ENCODE measurements at regions of chr12 and their contacts with region 1.

Region 1: DNA sequence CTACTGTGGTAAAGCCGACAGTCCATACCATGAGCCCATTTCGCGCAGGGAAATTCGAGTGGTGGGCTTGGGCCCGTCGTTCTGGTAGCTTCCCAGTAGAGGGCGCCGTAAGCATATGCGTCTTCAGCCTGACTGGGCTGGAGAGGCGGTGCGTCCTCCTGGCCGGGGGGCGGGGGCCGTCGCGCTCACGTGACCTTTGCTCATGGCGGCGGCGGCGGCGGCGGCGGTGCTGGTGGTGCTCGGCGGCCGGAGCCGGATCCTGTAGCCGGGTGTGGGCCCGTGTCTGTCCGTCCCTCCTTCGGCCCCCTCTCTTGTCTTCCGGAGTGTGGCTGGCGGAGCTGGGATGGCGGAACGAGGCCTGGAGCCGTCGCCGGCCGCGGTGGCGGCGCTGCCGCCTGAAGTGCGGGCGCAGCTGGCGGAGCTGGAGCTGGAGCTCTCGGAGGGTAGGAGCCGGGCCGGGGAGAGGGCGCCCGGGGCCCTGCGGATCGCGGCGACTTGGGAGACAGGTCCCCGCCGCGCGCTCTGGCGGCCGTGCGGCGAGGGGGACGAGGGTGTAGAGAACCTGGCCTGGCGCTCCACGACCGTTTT is at the start of gene DIP2B:
- H3K4me3 Mint-ChIP-seq: peak within 1 kb of the TSS; percentile 94
- H3K27ac Mint-ChIP-seq: peak within 1 kb of the TSS; percentile 95
- H3K4me1 Mint-ChIP-seq: peaks cover 33% of the 10 kb centered on the region
- H3K27me3 Mint-ChIP-seq: no peaks in the 10 kb centered on the region

Region 2: GRCh38 chr12:50362671-50363070 is 142.2 kb before region 1 on chr12:
- intact Hi-C with region 1: no loop called
- H3K4me3 Mint-ChIP-seq: no peak overlapping the region
- H3K27ac Mint-ChIP-seq: no peak overlapping the region
- H3K4me1 Mint-ChIP-seq: no peaks in the 10 kb centered on the region
- H3K27me3 Mint-ChIP-seq: no peaks in the 10 kb centered on the region

Region 3: GRCh38 chr12:50542448-50542847 is 37.6 kb after region 1 on chr12:
- intact Hi-C with region 1: loop called (anchors 5 kb)
- H3K4me3 Mint-ChIP-seq: no peak overlapping the region
- H3K27ac Mint-ChIP-seq: peak overlapping the region; percentile 45
- H3K4me1 Mint-ChIP-seq: peaks cover 33% of the 10 kb centered on the region
- H3K27me3 Mint-ChIP-seq: no peaks in the 10 kb centered on the region

Region 4: DNA sequence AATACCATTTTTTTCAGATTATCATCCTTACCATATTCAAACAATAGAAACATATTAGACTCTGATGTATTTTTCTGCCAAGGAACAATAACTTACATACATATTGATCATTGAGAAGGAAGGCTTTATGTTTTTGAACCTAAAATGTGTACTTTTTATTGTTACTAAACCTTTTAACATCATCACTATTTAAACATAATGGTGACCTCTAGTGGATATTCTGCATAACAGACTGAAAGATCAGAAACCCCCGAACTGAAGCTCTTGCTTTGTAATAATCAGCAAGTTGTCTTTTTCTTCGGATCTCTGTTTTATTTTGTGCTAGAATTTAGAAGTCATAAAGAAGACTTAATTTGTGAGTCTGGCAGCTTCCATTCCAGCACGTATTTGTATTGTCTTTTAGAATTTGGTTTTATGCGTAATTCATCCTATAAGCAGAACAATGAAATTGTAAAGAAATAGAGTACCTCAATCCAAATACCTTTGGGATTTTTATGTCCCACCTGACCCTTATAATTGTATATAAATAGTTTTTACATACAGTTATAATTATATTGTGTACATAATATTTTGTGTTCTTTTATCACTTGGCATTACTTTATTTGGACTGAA is 133.1 kb after region 1 on chr12:
- intact Hi-C with region 1: loop called (anchors 1 kb)
- H3K4me3 Mint-ChIP-seq: no peak overlapping the region
- H3K27ac Mint-ChIP-seq: no peak overlapping the region
- H3K4me1 Mint-ChIP-seq: peaks cover 72% of the 10 kb centered on the region
- H3K27me3 Mint-ChIP-seq: no peaks in the 10 kb centered on the region

Region 5: DNA sequence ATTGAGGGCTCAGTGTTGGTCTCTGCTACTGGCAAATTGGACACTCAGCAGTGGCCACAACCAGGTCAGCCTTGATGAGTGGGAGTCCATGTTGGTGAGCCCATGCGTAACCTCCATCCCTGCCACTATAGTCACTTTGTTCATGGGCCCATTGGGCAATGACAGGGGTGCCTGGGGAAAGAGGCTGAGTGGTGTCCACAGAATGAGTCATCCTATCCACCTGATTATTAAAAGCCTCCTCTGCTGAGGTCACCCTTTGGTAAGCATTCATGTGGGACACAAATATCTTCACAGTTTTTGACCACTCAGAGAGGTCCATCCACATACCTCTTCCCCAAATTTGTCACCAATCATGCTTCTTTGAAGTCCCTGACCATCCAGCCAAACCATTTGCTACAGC is 1293.6 kb after region 1 on chr12:
- intact Hi-C with region 1: no loop called
- H3K4me3 Mint-ChIP-seq: no peak overlapping the region
- H3K27ac Mint-ChIP-seq: no peak overlapping the region
- H3K4me1 Mint-ChIP-seq: no peaks in the 10 kb centered on the region
- H3K27me3 Mint-ChIP-seq: no peaks in the 10 kb centered on the region

Measured in dendritic cell treated with granulocyte-macrophage colony-stimulating factor and Interleukin-4, amounts not matched to agents 40 ng/mL and 50 ng/mL, for 4 days (primary cell).